ENCODE measurements at regions of chr3 and their contacts with region 1.

Region 1: DNA sequence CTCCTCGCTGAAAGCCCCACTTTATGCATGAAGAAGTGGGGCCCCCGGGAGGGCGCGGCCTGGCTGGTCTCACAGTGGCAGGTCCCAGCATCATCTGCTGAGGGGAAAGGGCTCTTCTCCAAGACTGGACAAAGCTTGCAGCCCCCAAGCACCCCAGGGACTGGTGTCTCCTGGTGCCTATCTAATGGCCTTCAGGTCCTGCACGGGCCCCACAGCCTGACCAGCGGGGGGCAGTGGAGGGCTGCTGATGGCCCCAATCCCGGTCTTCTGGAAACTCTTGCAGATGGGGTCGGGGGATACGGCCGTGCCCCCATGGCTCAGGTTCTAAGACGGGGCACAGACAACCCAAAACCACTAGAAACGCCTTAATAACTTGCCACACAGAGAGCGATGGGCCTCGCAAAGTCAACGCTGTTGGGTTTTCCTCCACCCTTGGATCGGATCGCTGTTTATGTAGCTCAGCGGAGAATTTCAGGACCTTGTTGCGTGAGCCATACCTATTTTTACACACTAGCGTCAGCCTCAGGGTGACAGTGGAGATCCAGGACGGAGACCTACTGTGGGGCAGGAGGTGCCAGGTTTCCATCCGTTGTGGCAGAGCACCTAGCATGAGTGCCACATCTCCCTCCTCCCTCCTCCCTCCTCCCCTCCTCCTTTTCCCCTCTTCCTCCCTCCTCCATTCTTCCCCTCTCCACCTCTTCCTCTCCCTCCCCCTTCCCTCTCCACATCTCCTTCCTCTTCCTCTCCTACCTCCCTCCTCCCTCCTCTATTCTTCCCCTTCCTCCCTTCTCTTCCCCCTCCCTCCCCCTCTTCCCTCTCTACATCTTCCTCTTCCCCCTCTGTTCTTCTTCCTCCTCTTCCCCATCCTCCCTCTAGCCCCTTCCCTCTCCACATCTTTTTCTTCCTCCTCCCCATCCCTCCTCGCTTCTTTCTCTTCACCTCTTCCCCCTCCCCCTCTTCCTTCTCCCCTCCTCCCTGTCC is 79.3 kb upstream of the ALDH1L1 start:
- DNase-seq: peak; percentile 63
- ATAC-seq: peak; percentile 83 to 90

Region 2: GRCh38 chr3:126375835-126376331 is 116.2 kb after region 1 on chr3:
- intact Hi-C with region 1: loop called in 1 of 2 experiments (anchors 5 kb)
- DNase-seq: no peak
- ATAC-seq: no peak

Region 3: DNA sequence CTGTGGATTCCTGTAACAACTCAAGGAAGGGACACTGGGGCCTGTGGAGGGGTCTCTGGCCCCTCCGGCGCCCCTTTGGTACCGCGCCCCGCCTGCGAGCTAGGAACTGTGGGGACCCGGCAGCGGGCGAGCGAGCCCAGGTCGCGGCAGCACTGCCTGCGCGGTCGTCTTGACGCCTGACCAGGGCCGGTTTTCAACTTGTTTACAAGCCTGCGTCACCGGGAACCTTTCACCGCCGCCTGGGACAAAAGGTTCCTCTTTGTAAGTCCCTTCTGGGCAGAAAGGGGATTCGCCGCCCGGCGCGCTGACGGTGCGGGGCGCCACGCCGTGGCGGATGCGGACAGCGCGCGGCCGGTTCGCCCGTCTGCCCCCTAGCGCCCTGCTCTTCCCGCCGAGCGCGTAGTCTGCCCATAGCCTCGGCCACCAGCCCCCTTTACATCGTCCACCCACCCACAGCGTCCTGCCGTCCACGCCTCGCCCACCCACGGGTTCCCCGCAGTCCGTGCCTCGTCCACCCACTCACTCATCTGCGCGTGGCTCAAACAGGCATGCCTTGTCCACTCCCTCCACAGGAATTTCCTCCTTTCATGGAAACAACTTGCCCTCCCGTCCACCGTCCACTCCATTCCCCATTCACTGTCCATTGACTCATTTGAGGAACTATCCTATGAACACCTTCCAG is 129.6 kb after region 1 on chr3:
- intact Hi-C with region 1: loop called (anchors 1 to 2 kb)
- DNase-seq: peak; percentile 95
- ATAC-seq: peak; percentile 94 to 98

Region 4: DNA sequence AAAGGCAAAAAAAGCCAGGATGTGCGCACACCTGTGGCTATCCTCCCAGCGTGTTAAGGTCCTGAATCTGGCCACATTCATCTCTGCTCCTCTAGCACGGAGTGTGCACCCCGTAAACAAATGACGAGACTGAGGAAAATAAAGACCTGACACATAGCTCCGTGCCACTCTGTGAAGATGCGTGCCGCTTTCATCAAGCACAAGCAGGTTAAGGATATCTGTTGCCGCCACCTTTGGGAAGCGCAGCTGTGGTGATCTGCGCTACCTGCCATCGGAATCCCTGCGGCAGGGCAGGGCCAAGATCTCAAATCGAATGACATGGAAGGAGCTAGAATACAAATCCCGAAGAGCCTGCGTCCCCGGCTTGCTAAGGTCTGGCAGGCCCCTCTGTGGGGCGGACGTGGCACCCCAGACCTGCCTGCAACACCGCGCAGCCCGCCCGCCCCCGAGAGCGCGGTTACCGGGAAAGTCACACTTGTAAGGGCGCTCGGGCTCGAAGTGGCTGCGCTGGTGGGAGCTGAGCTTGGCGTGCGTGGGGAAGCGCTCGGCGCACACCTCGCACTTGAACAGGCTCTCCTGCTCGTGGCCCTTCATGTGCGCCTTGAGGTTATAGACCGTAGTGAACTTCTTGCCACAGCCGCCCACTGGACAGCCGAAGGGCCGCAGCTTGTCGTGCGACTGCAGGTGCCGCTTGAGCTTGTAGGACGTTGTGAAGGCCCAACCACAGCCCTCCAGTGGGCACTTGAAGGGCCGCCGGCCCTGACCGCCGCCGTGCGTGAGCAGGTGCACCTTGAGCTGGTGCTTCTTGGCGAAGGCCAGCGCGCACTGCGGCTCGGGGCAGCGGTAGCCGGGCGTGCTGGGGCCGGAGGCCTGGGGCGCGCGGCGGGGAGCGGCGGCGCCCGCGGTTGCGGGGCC is 215.1 kb after region 1 on chr3:
- intact Hi-C with region 1: loop called in 1 of 2 experiments (anchors 5 kb)
- DNase-seq: peak; percentile 49
- ATAC-seq: peak in 1 of 2 donors; percentile 2